A549 (cell line): ENCODE measurements at regions of chr1 and their contacts with region 1.

Region 1: DNA sequence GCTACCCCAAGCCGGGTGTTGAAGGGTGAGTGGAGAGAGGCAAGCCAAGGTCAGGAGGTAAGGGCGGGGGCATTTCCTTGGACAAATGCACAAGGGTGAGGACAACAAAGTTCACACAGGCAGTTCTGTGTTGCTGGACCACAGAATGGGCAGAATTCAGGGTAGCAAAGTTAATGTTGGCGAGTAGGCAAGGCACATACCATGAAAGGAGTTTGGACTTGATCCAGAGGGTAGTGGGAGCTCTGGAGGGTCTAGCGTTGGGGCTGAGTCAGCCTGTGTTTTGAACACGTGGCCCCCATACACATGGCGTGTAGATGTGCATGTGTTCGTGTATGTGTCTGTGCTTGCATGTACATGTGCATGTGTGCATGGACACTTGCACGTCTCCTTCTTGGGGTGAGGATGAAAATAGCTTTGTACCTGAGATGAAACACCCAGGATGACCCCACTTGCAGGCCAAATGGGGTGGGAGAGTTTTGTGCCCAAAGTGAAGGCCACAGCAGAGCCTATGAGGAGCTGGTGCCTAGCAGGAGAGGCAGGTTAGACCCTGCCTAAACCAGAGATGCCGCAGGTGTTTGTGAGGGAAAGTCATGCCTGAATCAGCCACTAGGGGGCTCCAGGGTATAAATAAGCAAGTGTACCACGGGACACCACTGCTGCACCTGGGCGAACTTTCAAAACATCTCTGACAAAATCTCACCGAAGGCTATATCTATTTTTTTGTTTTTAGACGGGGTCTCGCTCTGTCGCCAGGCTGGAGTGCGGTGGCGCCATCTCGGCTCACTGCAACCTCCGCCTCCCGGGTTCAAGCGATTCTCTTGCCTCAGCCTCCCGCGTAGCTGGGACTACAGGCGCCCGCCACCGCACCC is 21.8 kb downstream of the SLC27A3 start:
- DNase-seq: peak; percentile 70 to 86
- ATAC-seq: peak; percentile 58 to 83; a peak in 5 of 6 replicates
- H3K4me3 ChIP-seq: no peak overlapping the region
- H3K27ac ChIP-seq: no peak overlapping the region
- H3K4me1 ChIP-seq: no peaks in the 10 kb centered on the region
- CTCF ChIP-seq: peak; percentile 75
- EP300 ChIP-seq: no peak
- POLR2A ChIP-seq: no peak
- RAD21 ChIP-seq: peak; percentile 77 to 81

Region 2: GRCh38 chr1:153698020-153698931 is 98.7 kb before region 1 on chr1:
- CTCF ChIA-PET with region 1: no interaction called
- POLR2A ChIA-PET with region 1: no interaction called
- DNase-seq: no peak
- ATAC-seq: no peak
- H3K4me3 ChIP-seq: no peak overlapping the region
- H3K27ac ChIP-seq: peak overlapping the region; percentile 56 to 83
- H3K4me1 ChIP-seq: peaks cover 31% of the 10 kb centered on the region
- CTCF ChIP-seq: no peak
- EP300 ChIP-seq: no peak
- POLR2A ChIP-seq: no peak
- RAD21 ChIP-seq: no peak

Region 3: DNA sequence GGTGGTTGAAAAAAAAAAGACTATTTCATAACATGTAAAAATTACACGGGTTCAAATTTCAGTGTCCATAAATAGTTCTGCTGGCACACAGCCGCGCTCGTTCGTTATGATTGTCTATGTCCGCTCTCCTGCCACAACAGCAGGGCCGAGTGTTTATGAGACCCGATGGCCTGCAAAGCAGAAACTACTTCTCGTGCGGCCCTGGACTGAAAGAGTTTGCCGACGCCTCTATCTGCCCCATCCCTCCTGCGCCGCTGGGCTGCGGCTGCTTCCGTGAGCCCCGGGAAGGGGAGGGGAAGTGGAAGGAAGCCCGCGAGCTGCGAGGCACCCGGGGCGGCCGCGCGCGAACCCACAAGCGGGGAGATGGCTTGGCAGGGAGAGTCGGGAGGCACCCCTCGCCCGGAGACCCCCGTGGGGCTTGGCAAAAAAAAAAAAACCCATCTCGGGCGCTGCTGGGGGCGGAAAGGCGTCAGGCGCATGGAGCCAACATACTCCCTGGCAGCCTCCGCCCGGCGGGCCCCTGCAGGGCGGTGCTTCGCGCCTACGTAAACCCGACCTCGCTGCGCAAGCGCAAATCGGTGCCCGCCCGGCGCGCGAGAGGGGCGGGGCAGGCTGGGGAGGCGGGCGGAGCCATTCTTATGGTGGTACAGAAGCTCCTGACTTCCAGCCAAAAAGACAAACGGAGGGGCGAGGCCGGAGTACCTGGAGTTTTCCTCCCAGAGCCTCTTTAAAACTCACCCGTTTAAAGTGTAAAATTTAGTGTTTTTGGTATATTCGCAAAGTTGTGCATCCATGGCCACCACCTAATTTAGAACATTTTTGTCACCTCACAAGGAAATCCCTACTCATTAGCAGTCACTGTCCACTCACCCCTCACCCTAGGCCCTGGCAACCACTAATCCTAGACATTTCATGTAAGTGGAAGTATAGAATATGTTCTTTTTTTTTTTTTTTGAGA is 13.5 kb before region 1 on chr1:
- CTCF ChIA-PET with region 1: interaction called, 29 read pairs
- POLR2A ChIA-PET with region 1: interaction called, 4 read pairs
- DNase-seq: peak; percentile 92 to 95
- ATAC-seq: peak; percentile 92 to 96
- H3K4me3 ChIP-seq: peak overlapping the region; percentile 53
- H3K27ac ChIP-seq: peak overlapping the region; percentile 86 to 95
- H3K4me1 ChIP-seq: peaks cover 4% of the 10 kb centered on the region; the same call in 2 of the 3 replicates
- CTCF ChIP-seq: no peak
- EP300 ChIP-seq: no peak
- POLR2A ChIP-seq: peak; percentile 87
- RAD21 ChIP-seq: no peak; a peak in 1 of 5 replicates

Region 4: DNA sequence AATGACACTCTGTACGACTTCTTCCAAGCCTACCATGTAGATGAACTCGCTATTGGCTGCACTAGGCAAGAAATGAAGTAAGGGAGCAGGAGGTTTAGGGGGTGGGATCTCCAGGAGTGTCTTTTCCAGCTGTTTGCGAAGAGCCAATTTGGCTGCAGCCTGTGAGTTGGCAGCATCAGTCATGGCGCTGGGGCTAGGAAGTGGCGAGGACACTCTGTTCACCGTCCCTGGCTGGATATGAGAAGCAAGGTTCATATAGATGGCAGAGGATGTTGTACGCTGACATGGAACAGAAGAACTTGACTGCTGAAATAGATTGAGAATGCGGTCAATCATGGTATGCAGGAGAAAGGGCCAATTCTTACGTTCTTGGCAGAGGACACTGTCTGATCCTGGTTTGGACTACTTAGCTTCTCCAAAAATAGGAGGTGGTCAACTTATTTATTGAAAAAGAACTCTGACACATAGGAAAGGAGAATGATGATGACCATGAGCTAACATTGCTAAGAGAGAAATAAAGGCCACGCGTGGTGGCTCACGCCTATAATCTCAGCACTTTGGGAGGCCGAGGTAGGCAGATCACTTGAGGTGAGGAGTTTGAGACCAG is 19.4 kb after region 1 on chr1:
- CTCF ChIA-PET with region 1: interaction called, 19 read pairs
- POLR2A ChIA-PET with region 1: no interaction called
- DNase-seq: no peak
- ATAC-seq: no peak
- H3K4me3 ChIP-seq: no peak overlapping the region
- H3K27ac ChIP-seq: no peak overlapping the region
- H3K4me1 ChIP-seq: no peaks in the 10 kb centered on the region
- CTCF ChIP-seq: no peak
- EP300 ChIP-seq: no peak
- POLR2A ChIP-seq: no peak
- RAD21 ChIP-seq: no peak

Region 5: DNA sequence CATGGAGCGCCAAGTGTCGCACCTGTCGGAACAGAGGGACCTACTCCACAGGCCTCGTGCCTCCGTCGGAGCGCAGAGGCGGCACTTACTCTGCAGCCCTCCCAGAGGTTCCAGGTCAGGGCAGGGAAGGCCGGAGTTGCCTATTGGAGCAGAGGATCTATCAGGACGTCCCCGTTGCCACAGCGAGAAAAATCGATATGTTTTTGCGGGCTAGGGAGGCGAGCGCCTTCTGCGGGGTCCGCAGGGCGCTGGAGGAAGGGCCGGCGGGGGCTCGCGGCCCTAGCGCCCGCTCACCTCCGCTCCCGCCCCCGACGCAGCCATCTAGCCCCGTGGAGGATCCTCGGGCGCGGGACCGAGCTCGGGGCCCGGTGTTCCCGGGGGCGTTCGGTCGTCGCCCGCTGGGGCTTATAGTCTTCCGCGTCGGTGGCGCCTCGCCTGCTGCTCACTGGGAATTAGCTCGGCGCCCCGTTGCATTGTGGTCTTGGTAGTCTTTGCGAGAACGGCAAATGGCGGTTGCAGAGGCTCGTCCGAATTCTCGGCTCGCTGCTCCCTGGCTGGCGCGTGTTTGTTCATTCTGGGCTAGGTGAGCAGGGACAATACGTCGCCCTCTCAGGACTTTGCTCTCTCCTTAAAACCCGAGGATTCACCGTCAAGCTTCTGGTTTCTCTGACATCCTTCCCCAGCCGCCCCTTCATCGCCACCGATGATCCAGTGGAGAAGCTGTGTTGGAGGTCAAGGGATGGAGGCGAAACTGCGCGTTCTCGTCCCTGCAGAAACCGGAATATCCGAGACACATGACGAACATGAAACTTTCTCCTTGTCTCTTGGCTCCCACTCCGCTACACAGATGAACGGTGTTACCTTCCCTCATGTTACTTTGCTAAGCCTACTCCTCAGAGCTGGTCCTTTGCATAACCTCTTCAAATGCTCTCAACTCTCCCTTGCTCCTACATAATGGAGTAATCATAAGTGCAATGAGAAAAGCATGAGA is 180.5 kb after region 1 on chr1 and contains the start of gene JTB:
- CTCF ChIA-PET with region 1: interaction called, 23 read pairs
- POLR2A ChIA-PET with region 1: no interaction called
- DNase-seq: peak; percentile 82 to 90
- ATAC-seq: peak; percentile 95 to 98
- H3K4me3 ChIP-seq: peak within 1 kb of the TSS; percentile 92
- H3K27ac ChIP-seq: peak within 1 kb of the TSS; percentile 88 to 95
- H3K4me1 ChIP-seq: peaks cover 18% of the 10 kb centered on the region
- CTCF ChIP-seq: no peak
- EP300 ChIP-seq: no peak
- POLR2A ChIP-seq: peak; percentile 56
- RAD21 ChIP-seq: no peak
- polyA plus RNA-seq, gene JTB: 162 and 178 TPM in 2 replicates